Dorsolateral prefrontal cortex (tissue), 120 donors: ENCODE measurements at regions of chr20 and their contacts with region 1.

Region 1: GRCh38 chr20:24808616-24809015 is 140.5 kb upstream of the CST7 start:
- DNase-seq: no peak
- H3K4me3 ChIP-seq: no peak overlapping the region
- H3K27ac ChIP-seq: no peak overlapping the region
- H3K27me3 ChIP-seq: peaks cover 0 to 6% (median 0%) of the 10 kb centered on the region in 45 donors
- CTCF ChIP-seq: no peak

Region 2: GRCh38 chr20:24863356-24863755 is 54.7 kb after region 1 on chr20:
- intact Hi-C with region 1: loop called in 1 of 2 experiments (anchors 10 kb)
- DNase-seq: no peak
- H3K4me3 ChIP-seq: no peak overlapping the region
- H3K27ac ChIP-seq: no peak overlapping the region
- H3K27me3 ChIP-seq: no peaks in the 10 kb centered on the region
- CTCF ChIP-seq: no peak

Region 3: DNA sequence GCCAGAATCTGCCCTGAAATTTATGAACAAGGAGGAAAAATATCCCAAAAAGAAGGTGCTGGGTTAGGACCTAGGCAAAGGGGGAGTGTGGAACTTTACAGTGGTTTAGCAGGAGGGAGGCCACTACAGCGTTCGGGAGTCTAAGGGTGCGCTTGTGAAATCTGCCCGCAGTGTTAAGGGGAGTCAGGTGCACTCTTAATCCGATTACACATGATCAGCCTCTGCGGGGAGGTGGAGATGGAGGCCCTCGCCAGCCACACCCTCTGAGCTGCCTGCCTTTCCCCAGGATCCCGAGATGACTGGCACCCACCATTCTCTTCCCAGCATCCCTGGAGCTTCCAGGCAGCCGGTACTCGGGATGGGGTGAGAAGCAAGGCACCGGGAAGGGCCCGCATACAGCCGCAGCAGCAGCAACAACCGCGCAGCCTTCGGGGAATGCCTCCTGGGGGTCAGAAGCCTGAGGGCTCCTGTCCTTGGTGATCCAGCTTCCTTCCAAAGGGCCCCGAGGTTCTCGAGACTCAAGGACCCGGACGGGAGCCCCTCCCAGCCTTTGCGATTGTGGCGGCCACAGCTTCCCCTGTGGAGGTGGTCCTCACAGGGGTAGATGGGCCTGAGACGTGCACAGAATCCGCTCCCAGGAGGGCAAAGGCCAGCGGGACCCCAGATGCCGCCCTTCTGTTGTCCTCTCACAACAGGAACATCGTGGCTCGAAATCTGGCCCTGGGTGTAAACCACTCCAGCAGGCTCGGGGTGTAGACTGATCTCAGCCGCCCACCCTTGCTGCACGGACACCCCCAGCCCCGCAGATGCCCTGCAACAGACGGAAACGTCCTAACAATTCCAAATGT is 83.2 kb after region 1 on chr20:
- intact Hi-C with region 1: loop called in 1 of 2 experiments (anchors 10 kb)
- DNase-seq: no peak
- H3K4me3 ChIP-seq: no peak overlapping the region
- H3K27ac ChIP-seq: no peak overlapping the region
- H3K27me3 ChIP-seq: no peaks in the 10 kb centered on the region
- CTCF ChIP-seq: no peak

Region 4: DNA sequence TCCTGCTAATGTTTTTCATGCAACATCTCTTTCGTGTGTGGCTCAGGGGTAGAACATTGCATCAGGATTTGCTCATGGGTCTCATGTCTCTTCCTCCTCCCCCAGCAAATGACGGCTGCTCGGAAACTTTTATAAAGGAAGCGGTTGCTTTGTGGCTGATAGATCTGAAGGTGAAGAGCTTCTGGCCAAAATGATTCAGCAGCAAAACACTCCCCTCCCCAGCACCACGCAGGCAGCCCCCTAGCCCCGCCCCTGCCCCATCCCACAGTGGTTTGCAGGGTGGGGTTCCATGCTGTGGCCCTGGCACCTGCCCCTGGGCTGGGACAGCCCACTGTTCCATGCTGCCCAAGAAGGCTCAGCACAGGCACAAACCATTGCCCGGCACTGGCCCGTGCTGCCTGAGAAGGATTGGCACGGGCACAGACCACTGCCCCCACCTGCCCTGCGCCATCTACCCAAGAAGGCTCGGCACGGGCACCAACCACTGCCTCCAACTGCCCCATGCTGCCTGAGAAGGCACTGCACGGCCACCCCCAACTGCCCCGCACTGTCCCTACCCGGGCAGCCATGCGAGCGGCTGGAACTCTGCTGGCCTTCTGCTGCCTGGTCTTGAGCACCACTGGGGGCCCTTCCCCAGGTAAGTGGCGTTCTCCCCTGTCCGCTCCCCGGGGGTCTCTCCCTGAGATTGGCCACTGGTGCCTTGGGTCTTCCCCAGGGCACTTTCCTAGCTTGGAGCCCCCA is 140.5 kb after region 1 on chr20 and contains the start of gene CST7:
- intact Hi-C with region 1: no loop called
- DNase-seq: peak in 2 of 10 donors; percentile 26 to 40
- H3K4me3 ChIP-seq: no peak within 1 kb of the TSS
- H3K27ac ChIP-seq: no peak within 1 kb of the TSS
- H3K27me3 ChIP-seq: no peaks in the 10 kb centered on the region
- CTCF ChIP-seq: no peak
- total RNA-seq, gene CST7: 0.41 to 9.7 (median 1.1) TPM in 66 of 120 experiments, not detected in the others